Panc1 (cell line): ENCODE measurements at regions of chr1 and their contacts with region 1.

Region 1: DNA sequence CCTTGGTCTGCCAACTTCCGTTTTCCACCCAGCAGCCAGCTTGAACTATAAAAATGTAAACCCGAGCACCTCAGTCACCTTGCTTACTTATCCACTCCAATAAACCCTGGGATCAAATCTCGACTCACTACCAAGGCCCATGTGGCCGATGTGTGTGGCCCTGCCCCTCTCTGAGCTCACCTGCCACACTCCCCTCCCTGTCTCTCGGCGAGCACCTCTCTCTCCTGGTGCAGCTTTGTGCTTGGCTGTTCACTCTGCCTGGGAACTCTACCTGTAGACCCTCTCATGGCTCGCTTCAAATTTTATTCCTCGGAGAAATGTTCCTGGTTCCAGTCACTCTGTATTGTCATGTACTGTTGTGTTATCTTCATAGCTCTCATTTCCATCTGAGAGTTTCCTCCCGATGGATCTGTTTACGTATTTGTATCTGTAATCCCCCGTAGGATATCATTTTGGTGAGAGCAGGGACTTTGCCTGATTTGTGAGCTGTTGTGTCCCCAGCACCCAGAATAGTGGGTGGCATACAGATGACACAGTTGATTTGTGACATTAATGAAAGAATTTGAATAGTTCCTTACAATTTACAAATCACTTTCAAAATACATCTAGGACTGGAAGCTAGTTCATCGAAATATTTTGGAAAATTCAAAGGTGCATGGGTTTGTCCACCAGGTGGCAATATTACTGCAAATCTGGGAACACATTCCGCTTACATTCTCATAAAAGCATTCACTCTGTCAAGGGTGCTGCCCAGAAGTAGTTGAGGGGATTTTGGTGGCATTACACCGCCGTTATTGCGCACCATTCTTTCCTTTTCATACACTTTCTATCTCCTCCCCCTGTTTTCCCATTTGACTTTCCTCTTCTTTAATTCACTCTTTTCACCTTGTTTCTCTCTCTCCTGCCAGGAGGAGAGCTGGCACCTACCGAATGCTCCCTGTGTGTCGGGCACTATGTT is 95.3 kb downstream of the ABCA4 start:
- DNase-seq: peak; percentile 54
- ATAC-seq: peak; percentile 79
- H3K4me3 ChIP-seq: peak overlapping the region; percentile 38 to 71
- H3K27ac ChIP-seq: peak overlapping the region; percentile 88
- H3K4me1 ChIP-seq: peaks cover 27% of the 10 kb centered on the region
- H3K27me3 ChIP-seq: no peaks in the 10 kb centered on the region
- CTCF ChIP-seq: peak; percentile 77

Region 2: GRCh38 chr1:94039514-94039870 is 13.8 kb after region 1 on chr1:
- CTCF ChIA-PET with region 1: interaction called, 13 read pairs
- POLR2A ChIA-PET with region 1: no interaction called
- in situ Hi-C with region 1: no loop called
- intact Hi-C with region 1: no loop called
- DNase-seq: peak; percentile 47
- ATAC-seq: peak; percentile 78
- H3K4me3 ChIP-seq: no peak overlapping the region
- H3K27ac ChIP-seq: peak overlapping the region; percentile 70
- H3K4me1 ChIP-seq: peaks cover 11% of the 10 kb centered on the region
- H3K27me3 ChIP-seq: no peaks in the 10 kb centered on the region
- CTCF ChIP-seq: peak; percentile 91